Activated CD4-positive, alpha-beta T cell treated with anti-CD3 and anti-CD28 coated beads, Interleukin-2, amount 10 ng/mL, durations not matched to agents 7 days and 5 days (primary cell): ENCODE measurements at regions of chr14 and their contacts with region 1.

Region 1: DNA sequence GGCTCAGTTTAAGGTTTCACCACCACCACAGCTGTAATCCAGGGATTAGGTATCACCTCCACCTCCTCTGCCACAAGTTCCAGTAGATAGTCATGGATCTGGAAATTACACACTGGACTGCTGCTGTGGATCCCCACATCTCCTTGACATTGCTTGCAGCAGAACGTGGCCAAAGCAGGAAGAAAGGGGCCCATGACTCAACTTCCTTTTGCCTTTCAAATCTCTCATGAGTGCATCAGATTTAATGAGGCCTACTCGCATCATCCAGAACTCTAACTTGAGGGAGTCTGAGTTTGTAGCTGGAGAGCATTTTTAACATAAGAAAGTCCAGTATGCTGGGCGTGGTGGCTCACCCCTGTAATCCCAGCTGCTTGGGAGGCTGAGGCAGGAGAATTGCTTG is 29.2 kb upstream of the TMED10 start:
- DNase-seq: no peak
- H3K4me3 Mint-ChIP-seq: no peak overlapping the region
- H3K27ac Mint-ChIP-seq: peak overlapping the region; percentile 71
- H3K4me1 Mint-ChIP-seq: peaks cover 25% of the 10 kb centered on the region
- H3K27me3 Mint-ChIP-seq: peaks cover 5% of the 10 kb centered on the region

Region 2: DNA sequence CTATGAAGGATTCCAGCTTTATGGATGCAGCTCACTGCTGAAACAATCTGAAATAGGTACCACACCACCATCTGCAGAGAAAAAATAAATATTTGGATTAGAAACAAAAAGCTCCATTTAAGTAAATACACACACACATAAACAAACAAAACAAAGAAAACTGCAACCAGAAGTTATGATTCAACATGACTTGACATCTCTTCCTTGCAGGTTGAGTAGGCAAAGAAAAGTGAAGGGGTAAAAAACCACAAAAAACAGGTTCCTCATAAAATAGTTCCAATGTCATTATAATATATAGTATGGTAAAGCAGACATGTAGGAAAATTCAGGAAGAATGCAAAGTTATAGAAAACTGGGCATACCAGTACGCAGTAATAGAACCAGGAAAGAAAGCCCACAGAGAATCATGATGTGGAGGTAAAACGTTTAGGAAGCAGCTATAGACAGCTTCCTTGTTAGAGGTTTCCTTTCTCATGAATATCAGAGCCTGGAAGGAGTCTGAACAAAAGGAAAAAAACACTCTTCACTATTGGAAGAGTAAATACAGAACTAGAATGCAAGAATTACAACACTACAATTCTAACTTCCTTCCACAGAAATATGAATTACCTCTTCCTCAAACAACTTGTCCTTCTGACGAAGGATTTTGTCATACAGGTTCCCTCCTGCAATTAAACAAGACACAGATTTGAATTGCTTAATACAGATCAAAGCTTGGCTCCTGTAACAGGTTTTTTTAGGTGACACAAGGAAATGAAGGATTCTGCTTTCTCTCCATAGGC is 84.9 kb before region 1 on chr14:
- CTCF ChIA-PET with region 1: no interaction called
- POLR2A ChIA-PET with region 1: no interaction called
- DNase-seq: no peak
- H3K4me3 Mint-ChIP-seq: no peak overlapping the region
- H3K27ac Mint-ChIP-seq: no peak overlapping the region
- H3K4me1 Mint-ChIP-seq: peaks cover 35% of the 10 kb centered on the region
- H3K27me3 Mint-ChIP-seq: no peaks in the 10 kb centered on the region

Region 3: GRCh38 chr14:75165586-75166391 is 39.8 kb before region 1 on chr14:
- CTCF ChIA-PET with region 1: no interaction called
- POLR2A ChIA-PET with region 1: no interaction called
- DNase-seq: no peak
- H3K4me3 Mint-ChIP-seq: no peak overlapping the region
- H3K27ac Mint-ChIP-seq: no peak overlapping the region
- H3K4me1 Mint-ChIP-seq: peaks cover 51% of the 10 kb centered on the region
- H3K27me3 Mint-ChIP-seq: no peaks in the 10 kb centered on the region

Region 4: GRCh38 chr14:75217508-75218206 is 12.1 kb after region 1 on chr14:
- CTCF ChIA-PET with region 1: interaction called, 10 read pairs
- POLR2A ChIA-PET with region 1: no interaction called
- DNase-seq: no peak
- H3K4me3 Mint-ChIP-seq: no peak overlapping the region
- H3K27ac Mint-ChIP-seq: no peak overlapping the region
- H3K4me1 Mint-ChIP-seq: peaks cover 23% of the 10 kb centered on the region
- H3K27me3 Mint-ChIP-seq: peaks cover 13% of the 10 kb centered on the region

Region 5: DNA sequence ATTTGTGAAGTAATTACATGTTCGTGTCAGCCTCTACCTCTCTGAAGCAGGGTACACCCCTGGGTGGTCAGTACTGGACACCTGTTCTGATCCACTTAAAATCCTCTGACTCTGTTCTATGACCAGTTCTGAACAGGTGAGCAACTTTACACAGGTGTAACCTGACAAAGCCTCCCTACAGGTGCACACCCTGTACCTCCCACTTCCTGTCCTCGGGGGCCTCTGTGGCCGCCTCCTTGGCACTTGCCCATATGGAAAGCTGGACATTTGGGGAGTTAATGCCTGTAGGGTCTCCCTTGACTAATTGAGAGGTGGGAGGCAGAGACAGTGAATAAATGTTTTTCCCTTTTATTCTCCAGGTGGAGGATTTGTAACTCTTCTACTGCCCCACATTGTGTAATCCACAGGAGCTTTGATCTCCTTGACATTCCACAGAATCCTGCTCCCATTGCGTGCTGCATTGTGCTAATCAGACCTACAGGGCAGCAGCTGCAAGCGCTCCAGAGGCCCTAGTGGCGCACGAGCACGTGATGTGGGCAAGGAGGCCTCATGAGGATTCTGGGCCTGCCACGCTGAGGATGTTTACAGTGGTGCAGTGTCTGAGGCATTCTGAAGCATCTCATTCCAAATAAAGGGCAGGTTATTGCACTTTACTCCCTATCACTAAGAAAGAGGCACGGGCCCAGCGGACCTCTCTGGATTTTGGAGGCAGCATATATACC is 270.8 kb after region 1 on chr14:
- CTCF ChIA-PET with region 1: no interaction called
- POLR2A ChIA-PET with region 1: no interaction called
- DNase-seq: no peak
- H3K4me3 Mint-ChIP-seq: no peak overlapping the region
- H3K27ac Mint-ChIP-seq: no peak overlapping the region
- H3K4me1 Mint-ChIP-seq: no peaks in the 10 kb centered on the region
- H3K27me3 Mint-ChIP-seq: peaks cover 7% of the 10 kb centered on the region